ENCODE measurements at regions of chr12 and their contacts with region 1.

Region 1: GRCh38 chr12:49720214-49720613 is 13.0 kb upstream of the FMNL3 start:
- DNase-seq: peak in 1 of 9 experiments; percentile 34
- ATAC-seq: no peak
- H3K4me3 ChIP-seq: no peak overlapping the region
- H3K4me3 Mint-ChIP-seq: no peak overlapping the region
- H3K27ac ChIP-seq: no peak overlapping the region
- H3K27ac Mint-ChIP-seq: no peak overlapping the region
- H3K4me1 ChIP-seq: no peaks in the 10 kb centered on the region
- H3K4me1 Mint-ChIP-seq: no peaks in the 10 kb centered on the region
- H3K27me3 ChIP-seq: peaks cover 0 to 2% of the 10 kb centered on the region in 2 experiments
- H3K27me3 Mint-ChIP-seq: peaks cover 12% of the 10 kb centered on the region
- CTCF ChIP-seq: no peak

Region 2: DNA sequence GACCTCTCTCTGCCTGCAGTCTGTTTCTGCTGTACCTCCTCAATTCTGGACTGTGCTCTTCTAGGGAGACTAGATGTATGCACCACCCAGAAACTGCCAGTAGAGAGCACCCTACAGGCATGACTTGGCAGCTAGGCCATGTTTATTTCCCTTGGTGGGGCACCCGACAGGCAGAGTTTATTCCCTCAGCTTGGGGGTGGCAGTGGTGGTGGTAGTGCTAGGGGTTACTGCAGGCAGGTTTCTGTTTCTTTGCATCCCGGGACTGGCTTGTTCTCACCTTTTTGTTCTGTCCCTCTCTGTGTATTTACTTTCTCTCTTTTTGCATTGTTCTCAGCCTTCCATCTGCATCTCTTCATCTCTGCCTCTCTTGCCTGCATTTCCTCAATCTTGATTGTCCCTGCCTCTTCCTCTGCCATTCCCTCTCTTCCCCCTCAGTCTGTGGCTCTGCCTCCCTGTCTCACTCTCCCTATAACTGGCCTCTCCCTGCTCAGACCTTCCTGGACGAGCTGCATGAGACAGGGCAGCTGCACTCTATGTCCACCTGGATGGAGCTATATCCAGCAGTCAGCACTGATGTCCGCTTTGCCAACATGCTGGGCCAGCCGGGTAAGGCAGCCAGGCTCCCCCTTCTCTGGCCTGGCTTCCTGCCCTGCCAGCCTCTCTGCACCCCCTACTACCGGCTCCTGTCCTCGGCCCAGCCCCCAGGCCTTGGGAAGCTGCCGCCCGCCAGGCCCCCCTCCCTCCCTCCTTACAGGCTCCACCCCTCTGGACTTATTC is 83.0 kb before region 1 on chr12:
- CTCF ChIA-PET with region 1: interaction called, 10 read pairs
- POLR2A ChIA-PET with region 1: no interaction called
- intact Hi-C with region 1: no loop called
- DNase-seq: peak in 8 of 9 experiments; percentile 39 to 76 (median 62)
- ATAC-seq: peak; percentile 99
- H3K4me3 ChIP-seq: no peak overlapping the region
- H3K4me3 Mint-ChIP-seq: no peak overlapping the region
- H3K27ac ChIP-seq: no peak overlapping the region
- H3K27ac Mint-ChIP-seq: peak overlapping the region; percentile 46
- H3K4me1 ChIP-seq: peaks cover 21% of the 10 kb centered on the region
- H3K4me1 Mint-ChIP-seq: peaks cover 29% of the 10 kb centered on the region
- H3K27me3 ChIP-seq: no peaks in the 10 kb centered on the region
- H3K27me3 Mint-ChIP-seq: no peaks in the 10 kb centered on the region
- CTCF ChIP-seq: peak; percentile 65

Region 3: GRCh38 chr12:49730568-49731101 is 10.4 kb after region 1 on chr12:
- CTCF ChIA-PET with region 1: no interaction called
- POLR2A ChIA-PET with region 1: no interaction called
- intact Hi-C with region 1: no loop called
- DNase-seq: no peak
- ATAC-seq: no peak
- H3K4me3 ChIP-seq: no peak overlapping the region
- H3K4me3 Mint-ChIP-seq: no peak overlapping the region
- H3K27ac ChIP-seq: no peak overlapping the region
- H3K27ac Mint-ChIP-seq: no peak overlapping the region
- H3K4me1 ChIP-seq: no peaks in the 10 kb centered on the region
- H3K4me1 Mint-ChIP-seq: no peaks in the 10 kb centered on the region
- H3K27me3 ChIP-seq: peaks cover 0 to 2% of the 10 kb centered on the region in 2 experiments
- H3K27me3 Mint-ChIP-seq: peaks cover 5% of the 10 kb centered on the region
- CTCF ChIP-seq: no peak